Naive thymus-derived CD8-positive, alpha-beta T cell (primary cell): ENCODE measurements at regions of chr12 and their contacts with region 1.

Region 1: GRCh38 chr12:131949431-131950181 is at the start of gene EP400:
- DNase-seq: peak; percentile 79 to 96 (median 89)
- ATAC-seq: peak; percentile 89 to 91
- H3K4me3 Mint-ChIP-seq: peak within 1 kb of the TSS; percentile 83 to 95 (median 90)
- H3K27ac Mint-ChIP-seq: peak within 1 kb of the TSS; percentile 86 to 96 (median 93)
- H3K4me1 Mint-ChIP-seq: peaks cover 18 to 54% (median 37%) of the 10 kb centered on the region in 4 donors
- H3K27me3 Mint-ChIP-seq: no peaks in the 10 kb centered on the region
- polyA plus RNA-seq, gene EP400: 1.1 to 3.4 (median 2.0) TPM

Region 2: DNA sequence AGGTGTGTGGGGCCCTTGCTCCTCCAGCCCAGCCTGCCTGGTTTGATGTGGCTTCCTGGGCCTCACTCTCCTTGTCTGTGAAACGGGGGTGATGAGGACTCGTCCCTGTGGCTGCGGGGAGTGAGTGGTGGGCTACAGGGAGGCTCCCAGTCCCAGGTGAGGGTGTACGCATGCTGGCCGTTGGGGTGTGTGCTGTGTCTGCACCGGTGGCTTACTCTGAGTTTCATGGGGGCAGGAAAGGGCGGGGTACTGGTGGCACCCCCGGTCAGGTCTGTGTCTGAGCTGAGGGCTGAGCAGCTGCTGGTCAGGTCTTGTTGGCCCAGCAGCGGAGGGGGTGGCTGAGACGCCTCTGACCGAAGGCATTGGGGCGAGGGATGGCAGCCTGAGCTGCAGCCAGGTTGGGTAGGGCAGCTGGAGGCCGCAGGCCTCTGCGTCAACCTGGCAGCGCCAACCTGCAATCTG is 43.9 kb before region 1 on chr12:
- POLR2A ChIA-PET with region 1: no interaction called
- DNase-seq: peak in 1 of 10 donors; percentile 31
- ATAC-seq: no peak
- H3K4me3 Mint-ChIP-seq: no peak overlapping the region
- H3K27ac Mint-ChIP-seq: peak overlapping the region in 5 of 10 donors; percentile 39 to 90 (median 68)
- H3K4me1 Mint-ChIP-seq: peaks cover 11 to 35% (median 18%) of the 10 kb centered on the region in 4 donors
- H3K27me3 Mint-ChIP-seq: no peaks in the 10 kb centered on the region

Region 3: GRCh38 chr12:131916696-131917361 is 32.8 kb before region 1 on chr12:
- POLR2A ChIA-PET with region 1: no interaction called
- DNase-seq: peak in 1 of 10 donors; percentile 43
- ATAC-seq: no peak
- H3K4me3 Mint-ChIP-seq: no peak overlapping the region
- H3K27ac Mint-ChIP-seq: no peak overlapping the region
- H3K4me1 Mint-ChIP-seq: peaks cover 0 to 2% (median 0%) of the 10 kb centered on the region in 4 donors
- H3K27me3 Mint-ChIP-seq: no peaks in the 10 kb centered on the region

Region 4: DNA sequence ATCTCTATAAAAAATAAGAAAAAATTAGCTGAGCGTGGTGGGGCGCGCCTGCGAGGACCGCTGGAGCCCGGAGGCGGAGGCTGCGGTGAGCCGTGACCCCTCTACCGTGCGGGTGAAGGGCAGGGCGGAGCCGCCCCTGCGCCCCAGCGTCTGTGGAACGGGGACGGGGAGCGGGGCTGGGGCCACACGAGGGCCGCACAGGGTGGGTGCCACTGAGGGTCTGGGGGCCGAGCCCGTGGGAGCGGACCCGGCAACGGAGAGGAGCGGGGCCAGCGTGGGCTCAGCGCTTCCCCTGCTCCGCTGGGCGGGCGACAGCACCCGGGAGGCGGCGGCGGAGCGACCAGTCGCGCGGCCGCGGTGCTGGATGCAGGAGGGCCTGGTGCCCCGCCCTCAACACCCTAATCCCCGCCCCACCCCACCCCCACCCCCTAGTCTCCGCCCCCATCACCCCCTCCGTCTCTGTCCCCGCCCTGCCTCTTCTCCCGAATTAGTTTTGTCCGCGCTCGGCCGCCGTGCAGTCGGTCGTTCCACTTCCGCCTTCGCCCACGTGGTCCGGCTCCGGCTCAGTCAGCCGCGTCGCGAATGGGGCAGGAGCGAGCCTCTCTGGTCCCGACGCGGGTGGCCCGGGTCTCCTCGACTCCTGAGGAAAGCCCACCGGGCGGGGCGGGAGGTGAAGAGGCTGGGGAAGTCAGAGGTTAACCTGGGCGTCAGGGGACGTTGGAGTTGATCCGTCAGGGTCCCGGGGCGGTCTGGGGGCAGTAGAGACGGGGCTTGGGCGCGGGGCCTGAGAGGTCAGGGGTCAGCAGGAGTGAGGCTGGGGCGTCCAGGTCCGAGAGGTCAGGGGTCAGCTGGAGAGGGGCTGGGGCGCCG is 20.7 kb before region 1 on chr12 and contains the start of gene PUS1:
- POLR2A ChIA-PET with region 1: interaction called, 42 read pairs
- DNase-seq: peak; percentile 89 to 97 (median 92)
- ATAC-seq: peak; percentile 82 to 83
- H3K4me3 Mint-ChIP-seq: peak within 1 kb of the TSS; percentile 88 to 99 (median 94)
- H3K27ac Mint-ChIP-seq: peak within 1 kb of the TSS; percentile 77 to 95 (median 92)
- H3K4me1 Mint-ChIP-seq: peaks cover 14 to 33% (median 21%) of the 10 kb centered on the region in 4 donors
- H3K27me3 Mint-ChIP-seq: no peaks in the 10 kb centered on the region
- polyA plus RNA-seq, gene PUS1: 16.9 to 35.1 (median 17.5) TPM

Region 5: DNA sequence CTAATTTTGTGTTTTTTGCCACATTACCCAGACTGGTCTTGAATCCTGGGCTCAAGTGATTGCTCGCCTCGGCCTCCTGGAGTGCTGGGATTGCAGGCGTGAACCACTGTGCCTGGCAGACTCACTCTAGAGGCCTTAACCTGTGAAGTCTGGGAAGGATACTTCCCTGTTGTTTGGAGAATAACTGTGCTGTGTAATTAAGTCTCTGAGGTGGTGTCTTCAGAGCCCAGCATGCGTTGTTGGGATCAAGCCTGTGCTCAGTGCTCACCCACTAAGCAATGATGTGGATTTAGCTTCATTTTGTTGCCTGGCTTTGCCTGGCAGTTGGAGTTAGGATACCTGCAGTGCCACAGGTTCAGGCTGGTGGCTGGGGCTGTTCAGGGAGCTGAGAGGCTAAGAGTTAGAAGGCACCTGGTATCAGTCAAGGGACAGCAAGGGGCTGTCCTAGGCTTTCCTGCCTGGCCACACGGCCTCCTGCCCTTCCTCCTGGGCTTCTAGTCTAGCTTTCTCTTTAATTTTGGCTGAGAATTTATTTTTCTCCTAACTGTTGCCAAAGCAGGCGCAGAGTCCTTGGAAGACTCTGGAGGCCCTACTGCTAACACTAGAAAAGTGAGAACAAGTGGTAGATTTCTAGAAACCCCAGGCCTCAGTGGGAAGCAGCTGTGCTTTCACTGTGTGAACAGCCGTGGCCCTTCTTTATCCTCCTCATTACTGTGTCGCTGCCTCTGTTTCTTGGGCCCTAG is 38.6 kb after region 1 on chr12:
- POLR2A ChIA-PET with region 1: interaction called, 11 read pairs
- DNase-seq: no peak
- ATAC-seq: no peak
- H3K4me3 Mint-ChIP-seq: no peak overlapping the region
- H3K27ac Mint-ChIP-seq: peak overlapping the region in 2 of 10 donors; percentile 56 to 71
- H3K4me1 Mint-ChIP-seq: peaks cover 0 to 9% (median 2%) of the 10 kb centered on the region in 4 donors
- H3K27me3 Mint-ChIP-seq: no peaks in the 10 kb centered on the region

Region 6: GRCh38 chr12:132014092-132014914 is 64.7 kb after region 1 on chr12:
- POLR2A ChIA-PET with region 1: no interaction called
- DNase-seq: peak in 1 of 10 donors; percentile 42
- ATAC-seq: no peak
- H3K4me3 Mint-ChIP-seq: no peak overlapping the region
- H3K27ac Mint-ChIP-seq: no peak overlapping the region
- H3K4me1 Mint-ChIP-seq: peaks cover 0 to 3% (median 0%) of the 10 kb centered on the region in 4 donors
- H3K27me3 Mint-ChIP-seq: no peaks in the 10 kb centered on the region